Activated CD4-positive, alpha-beta T cell treated with anti-CD3 and anti-CD28 coated beads, Interleukin-2, amount 10 ng/mL, durations not matched to agents 7 days and 5 days (primary cell): ENCODE measurements at regions of chr16 and their contacts with region 1.

Region 1: GRCh38 chr16:84617791-84618580 is at the start of gene COTL1:
- DNase-seq: peak; percentile 94
- H3K4me3 Mint-ChIP-seq: peak within 1 kb of the TSS; percentile 99
- H3K27ac Mint-ChIP-seq: peak within 1 kb of the TSS; percentile 88
- H3K4me1 Mint-ChIP-seq: peaks cover 54% of the 10 kb centered on the region
- H3K27me3 Mint-ChIP-seq: peaks cover 12% of the 10 kb centered on the region
- total RNA-seq, gene COTL1: 780 to 845 TPM

Region 2: GRCh38 chr16:84504420-84505248 is 113.4 kb before region 1 on chr16 and contains the start of gene MEAK7:
- CTCF ChIA-PET with region 1: interaction called, 20 read pairs
- POLR2A ChIA-PET with region 1: no interaction called
- DNase-seq: peak; percentile 98
- H3K4me3 Mint-ChIP-seq: peak within 1 kb of the TSS; percentile 88
- H3K27ac Mint-ChIP-seq: peak within 1 kb of the TSS; percentile 90
- H3K4me1 Mint-ChIP-seq: peaks cover 62% of the 10 kb centered on the region
- H3K27me3 Mint-ChIP-seq: peaks cover 3% of the 10 kb centered on the region
- total RNA-seq, gene MEAK7: 8.8 to 10.0 TPM

Region 3: DNA sequence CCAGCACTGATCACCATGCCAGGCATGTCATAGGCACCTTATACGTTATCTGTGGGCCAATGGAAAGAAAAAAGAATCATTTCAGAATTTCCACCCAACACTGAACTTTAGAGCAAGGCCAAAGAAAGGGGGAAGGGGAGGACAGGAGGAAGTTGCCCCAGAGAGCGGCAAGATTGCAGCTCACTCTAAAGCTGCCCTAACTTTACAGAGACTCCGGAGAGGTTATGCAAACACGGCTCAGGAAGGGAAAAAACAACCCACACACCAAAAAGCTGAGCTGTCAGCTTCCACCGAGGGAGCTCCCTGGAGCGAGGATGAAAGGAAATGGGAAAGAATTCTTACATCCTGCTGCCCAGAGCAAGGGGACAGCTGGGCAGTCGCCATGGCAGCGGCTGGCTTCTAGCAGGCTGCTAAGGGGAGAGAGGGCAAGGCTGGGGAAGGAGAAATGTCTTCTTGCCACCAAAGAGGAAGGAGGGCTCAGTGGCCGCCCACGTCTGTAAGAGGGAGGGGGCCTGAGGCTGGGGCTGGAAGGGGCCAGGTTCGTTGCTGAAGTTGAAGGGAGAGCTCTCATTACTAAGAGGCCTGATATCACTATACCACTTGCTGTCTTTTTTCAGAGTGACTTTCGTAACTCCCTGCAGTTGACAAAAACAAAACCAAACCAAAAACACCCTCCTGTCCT is 18.3 kb before region 1 on chr16:
- CTCF ChIA-PET with region 1: interaction called, 12 read pairs
- POLR2A ChIA-PET with region 1: no interaction called
- DNase-seq: peak; percentile 43
- H3K4me3 Mint-ChIP-seq: peak overlapping the region; percentile 73
- H3K27ac Mint-ChIP-seq: peak overlapping the region; percentile 95
- H3K4me1 Mint-ChIP-seq: peaks cover 89% of the 10 kb centered on the region
- H3K27me3 Mint-ChIP-seq: no peaks in the 10 kb centered on the region

Region 4: GRCh38 chr16:84607694-84608093 is 10.3 kb before region 1 on chr16:
- CTCF ChIA-PET with region 1: interaction called, 13 read pairs
- POLR2A ChIA-PET with region 1: interaction called, 4 read pairs
- DNase-seq: peak; percentile 49
- H3K4me3 Mint-ChIP-seq: peak overlapping the region; percentile 74
- H3K27ac Mint-ChIP-seq: peak overlapping the region; percentile 95
- H3K4me1 Mint-ChIP-seq: peaks cover 95% of the 10 kb centered on the region
- H3K27me3 Mint-ChIP-seq: no peaks in the 10 kb centered on the region

Region 5: GRCh38 chr16:84785843-84786581 is 168.0 kb after region 1 on chr16:
- CTCF ChIA-PET with region 1: no interaction called
- POLR2A ChIA-PET with region 1: no interaction called
- DNase-seq: no peak
- H3K4me3 Mint-ChIP-seq: no peak overlapping the region
- H3K27ac Mint-ChIP-seq: no peak overlapping the region
- H3K4me1 Mint-ChIP-seq: no peaks in the 10 kb centered on the region
- H3K27me3 Mint-ChIP-seq: no peaks in the 10 kb centered on the region